ENCODE measurements at regions of chr11 and their contacts with region 1.

Region 1: DNA sequence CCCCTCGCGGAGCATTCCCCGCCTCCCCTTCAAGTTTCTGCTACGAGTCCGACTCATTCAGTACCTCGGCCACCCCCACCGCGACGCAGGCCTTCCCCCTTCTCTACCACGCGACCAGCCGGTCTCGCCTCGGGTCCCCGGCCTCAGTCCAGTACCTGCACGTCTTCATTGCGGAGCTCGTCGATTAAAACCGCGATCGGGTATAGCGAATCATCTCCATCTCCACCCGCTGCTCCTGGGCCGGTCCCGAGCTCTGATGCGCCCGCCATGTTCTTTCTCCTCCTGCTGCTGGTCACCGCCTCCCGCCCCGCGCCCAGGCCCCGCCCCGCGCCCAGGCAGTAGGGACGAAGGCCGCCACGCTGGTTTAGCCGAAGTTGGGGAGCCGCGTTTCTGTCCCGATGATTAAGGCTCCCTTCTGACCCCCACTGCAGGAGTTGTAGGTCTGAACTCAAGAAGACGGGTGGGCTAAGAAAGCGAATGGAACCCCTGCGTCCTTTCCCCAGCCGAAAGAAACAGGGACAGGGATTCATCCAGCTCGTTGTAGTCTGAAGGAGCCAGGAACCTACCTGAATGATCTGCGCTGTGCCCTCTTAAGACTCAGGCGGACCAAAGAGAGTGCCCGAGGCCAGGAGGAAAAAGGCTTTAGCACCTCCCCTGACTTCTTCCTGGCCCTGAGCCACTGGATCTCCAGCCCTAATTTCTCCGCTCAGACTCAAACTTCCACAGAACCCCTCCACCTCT is at the start of gene PPP2R1B:
- DNase-seq: peak; percentile 44
- ATAC-seq: peak; percentile 98
- H3K4me3 ChIP-seq: peak within 1 kb of the TSS; percentile 83
- H3K27ac ChIP-seq: peak within 1 kb of the TSS; percentile 90
- H3K4me1 ChIP-seq: peaks cover 8% of the 10 kb centered on the region; the same call in 1 of the 2 replicates
- H3K27me3 ChIP-seq: no peaks in the 10 kb centered on the region
- CTCF ChIP-seq: no peak
- POLR2A ChIP-seq: peak; percentile 73
- RAD21 ChIP-seq: no peak
- total RNA-seq, gene PPP2R1B: 52.8 and 62.9 TPM in 2 replicates

Region 2: DNA sequence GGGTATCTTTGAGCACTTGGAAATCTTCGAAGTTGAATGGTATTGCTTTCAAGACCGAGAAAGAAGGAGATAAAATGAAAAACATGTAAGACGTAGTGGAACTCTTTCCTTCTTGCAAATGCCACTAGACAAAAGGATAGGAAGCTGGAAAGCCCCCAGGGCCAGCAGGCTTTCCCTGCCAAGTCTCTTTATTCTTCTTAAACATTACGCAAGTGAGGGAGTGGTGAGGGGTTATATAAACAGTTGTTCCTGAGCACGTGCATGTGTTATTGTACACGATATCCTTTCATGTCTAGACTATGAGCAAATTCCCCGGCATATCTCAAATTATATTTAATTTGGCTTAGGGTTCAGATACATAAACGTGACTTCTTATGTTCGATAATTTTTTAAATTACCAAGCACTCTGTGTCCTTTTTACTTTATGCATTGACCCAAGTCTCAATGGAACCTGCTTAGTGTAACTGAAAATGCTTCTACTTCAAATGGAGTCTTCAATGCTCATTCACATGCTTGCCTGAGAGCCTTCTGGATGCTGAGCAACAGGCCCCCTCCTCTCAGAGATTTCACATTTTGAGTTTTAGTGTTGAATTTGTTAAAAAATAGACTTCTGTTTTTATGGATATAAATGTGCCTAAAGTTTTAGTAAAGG is 59.1 kb before region 1 on chr11:
- CTCF ChIA-PET with region 1: no interaction called
- POLR2A ChIA-PET with region 1: no interaction called
- dilution Hi-C with region 1: no loop called
- in situ Hi-C with region 1: no loop called
- intact Hi-C with region 1: no loop called
- DNase-seq: peak; percentile 95
- ATAC-seq: peak; percentile 83
- H3K4me3 ChIP-seq: no peak overlapping the region
- H3K27ac ChIP-seq: peak overlapping the region; percentile 50; the same call in 1 of the 2 replicates
- H3K4me1 ChIP-seq: peaks cover 4% of the 10 kb centered on the region
- H3K27me3 ChIP-seq: no peaks in the 10 kb centered on the region
- CTCF ChIP-seq: no peak
- POLR2A ChIP-seq: no peak
- RAD21 ChIP-seq: no peak

Region 3: GRCh38 chr11:111718436-111718835 is 47.8 kb before region 1 on chr11:
- CTCF ChIA-PET with region 1: interaction called, 3 read pairs
- POLR2A ChIA-PET with region 1: no interaction called
- dilution Hi-C with region 1: no loop called
- in situ Hi-C with region 1: no loop called
- intact Hi-C with region 1: loop called (anchors 5 kb)
- DNase-seq: peak; percentile 91
- ATAC-seq: peak; percentile 95
- H3K4me3 ChIP-seq: no peak overlapping the region
- H3K27ac ChIP-seq: peak overlapping the region; percentile 73
- H3K4me1 ChIP-seq: peaks cover 13% of the 10 kb centered on the region
- H3K27me3 ChIP-seq: no peaks in the 10 kb centered on the region
- CTCF ChIP-seq: no peak; the same call in 1 of the 2 replicates
- POLR2A ChIP-seq: 0 out of 2 replicates have a peak, but pooled peaks have one; percentile 49
- RAD21 ChIP-seq: peak; percentile 23